ENCODE measurements at regions of chr3 and their contacts with region 1.

Region 1: DNA sequence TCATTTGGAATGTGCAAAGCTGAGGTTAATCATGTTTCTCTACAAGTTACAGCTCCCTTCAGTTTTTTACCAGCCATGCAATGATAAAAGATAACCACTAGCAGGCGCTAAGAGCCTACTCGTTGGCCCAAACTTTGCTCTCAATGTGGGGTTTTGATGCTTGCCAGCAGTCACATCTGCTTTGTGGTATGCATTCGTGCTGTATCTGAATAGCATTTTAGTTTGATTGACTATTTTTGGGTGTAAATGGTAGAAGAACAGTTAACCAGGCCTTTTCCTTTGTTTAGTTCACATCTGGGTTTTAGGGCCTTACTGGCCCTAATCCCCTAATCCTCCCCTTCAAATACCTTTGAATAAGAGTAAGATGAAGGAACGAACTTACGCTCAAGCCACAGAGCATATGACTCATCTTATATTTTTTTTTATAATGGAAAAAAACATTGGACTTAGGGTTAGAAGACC is 4.4 kb upstream of the CLDN11 start:
- DNase-seq: no peak

Region 2: DNA sequence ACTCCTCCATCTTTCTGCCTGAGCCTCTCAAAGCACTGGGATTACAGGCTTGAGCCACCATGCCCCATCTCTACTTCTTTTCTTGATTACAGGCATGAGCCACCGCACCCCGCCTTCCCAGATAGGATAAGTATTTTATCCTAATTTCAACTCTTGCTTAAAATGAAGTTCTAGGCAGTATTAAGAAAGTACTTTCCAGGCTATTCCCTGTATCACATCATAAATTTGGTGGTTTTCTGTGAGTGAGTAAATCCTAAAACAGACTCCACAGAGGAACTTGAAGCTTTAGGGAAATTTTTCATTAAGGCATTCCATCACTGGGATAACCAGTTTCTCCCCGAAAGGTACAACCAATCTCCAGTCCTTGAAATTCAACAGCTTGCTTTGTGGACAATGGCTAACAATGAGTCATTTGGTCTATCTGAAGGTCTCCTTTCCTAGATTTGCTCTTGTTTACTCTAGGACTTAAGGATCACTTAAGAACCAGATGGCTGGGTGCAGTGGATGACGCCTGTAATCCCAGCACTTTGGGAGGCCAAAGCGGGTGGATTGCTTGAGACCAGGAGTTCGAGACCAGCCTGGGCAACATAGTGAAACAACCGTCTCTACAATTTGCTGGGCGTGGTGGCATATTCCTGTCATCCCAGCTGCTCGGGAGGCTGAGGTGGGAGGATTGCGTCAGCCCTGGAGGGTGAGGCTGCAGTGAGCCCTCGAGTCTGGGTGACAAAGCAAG is 106.4 kb before region 1 on chr3:
- intact Hi-C with region 1: loop called (anchors 2 kb)
- DNase-seq: no peak

Region 3: DNA sequence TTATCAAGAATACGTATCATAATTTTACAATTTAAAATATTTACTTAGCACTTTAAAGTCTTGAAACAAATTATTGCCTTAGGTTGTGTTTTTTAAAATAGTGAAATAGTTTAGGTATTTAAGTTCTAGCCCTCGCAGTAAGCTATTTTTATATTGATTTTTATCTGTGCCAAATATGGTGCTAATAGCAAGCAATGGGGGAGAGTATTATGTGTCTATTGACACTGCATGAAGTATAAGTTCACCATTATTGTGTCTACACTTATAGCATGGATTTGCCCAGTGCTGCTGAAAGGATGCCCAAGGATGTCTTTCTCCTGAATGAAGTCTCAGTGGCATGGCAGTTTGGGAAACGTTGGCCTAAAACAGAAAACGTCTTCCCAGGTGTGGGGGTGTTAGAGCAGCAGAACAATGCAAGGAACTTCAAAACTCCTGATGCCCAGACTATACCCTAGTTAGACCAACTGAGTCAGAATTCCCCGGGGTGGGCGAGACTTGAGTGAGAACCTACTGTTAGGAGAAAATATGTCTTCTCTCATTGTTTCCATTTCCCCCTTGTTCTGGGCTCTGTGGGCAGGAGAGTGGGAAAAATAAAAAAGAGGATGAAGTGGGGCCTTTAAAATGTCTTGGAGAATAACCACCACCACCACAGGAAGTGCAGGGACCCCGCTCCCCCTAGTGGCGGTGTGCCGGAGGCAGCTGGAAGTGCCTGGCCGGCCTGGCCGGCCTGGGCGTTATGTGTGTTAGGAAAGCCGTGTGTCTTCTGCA is 275.8 kb after region 1 on chr3:
- intact Hi-C with region 1: loop called (anchors 2 kb)
- DNase-seq: no peak

Region 4: DNA sequence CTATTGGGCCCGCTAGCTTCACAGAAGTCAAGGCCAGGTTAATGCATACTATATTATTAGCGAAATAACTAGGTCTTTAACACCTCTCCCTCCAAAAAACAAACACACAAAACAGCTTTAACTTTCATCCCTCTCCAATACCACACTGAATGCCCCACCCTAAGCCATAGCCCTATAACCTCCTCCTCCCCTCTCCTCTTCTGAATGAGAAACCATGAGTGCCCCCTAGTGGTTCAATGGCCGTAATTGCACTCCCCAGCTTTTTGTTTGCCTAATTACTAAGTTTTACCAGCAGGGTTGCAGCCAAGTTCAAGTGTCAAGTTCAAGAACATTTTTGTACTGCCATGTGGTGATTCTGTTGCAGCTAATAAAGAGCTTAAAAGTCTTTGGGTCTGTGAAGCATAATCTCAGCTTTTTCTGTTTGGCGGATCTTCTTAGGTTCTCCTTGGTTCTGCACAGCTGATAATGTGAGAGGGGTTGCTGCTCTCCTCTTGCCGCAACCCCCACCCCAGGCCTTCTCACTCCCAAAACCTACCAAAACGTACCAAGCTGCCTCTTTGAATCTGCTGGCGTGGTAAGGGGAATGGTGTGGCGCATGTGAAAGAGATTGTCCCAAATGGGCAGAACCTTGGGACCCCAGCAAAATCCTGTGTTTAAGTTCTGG is 397.8 kb after region 1 on chr3:
- intact Hi-C with region 1: loop called (anchors 2 kb)
- DNase-seq: no peak